Posterior vena cava (tissue), 2 donors: ENCODE measurements at regions of chr4 and their contacts with region 1.

Region 1: GRCh38 chr4:184136525-184136924 is 81.1 kb downstream of the ENPP6 start:
- DNase-seq: no peak

Region 2: DNA sequence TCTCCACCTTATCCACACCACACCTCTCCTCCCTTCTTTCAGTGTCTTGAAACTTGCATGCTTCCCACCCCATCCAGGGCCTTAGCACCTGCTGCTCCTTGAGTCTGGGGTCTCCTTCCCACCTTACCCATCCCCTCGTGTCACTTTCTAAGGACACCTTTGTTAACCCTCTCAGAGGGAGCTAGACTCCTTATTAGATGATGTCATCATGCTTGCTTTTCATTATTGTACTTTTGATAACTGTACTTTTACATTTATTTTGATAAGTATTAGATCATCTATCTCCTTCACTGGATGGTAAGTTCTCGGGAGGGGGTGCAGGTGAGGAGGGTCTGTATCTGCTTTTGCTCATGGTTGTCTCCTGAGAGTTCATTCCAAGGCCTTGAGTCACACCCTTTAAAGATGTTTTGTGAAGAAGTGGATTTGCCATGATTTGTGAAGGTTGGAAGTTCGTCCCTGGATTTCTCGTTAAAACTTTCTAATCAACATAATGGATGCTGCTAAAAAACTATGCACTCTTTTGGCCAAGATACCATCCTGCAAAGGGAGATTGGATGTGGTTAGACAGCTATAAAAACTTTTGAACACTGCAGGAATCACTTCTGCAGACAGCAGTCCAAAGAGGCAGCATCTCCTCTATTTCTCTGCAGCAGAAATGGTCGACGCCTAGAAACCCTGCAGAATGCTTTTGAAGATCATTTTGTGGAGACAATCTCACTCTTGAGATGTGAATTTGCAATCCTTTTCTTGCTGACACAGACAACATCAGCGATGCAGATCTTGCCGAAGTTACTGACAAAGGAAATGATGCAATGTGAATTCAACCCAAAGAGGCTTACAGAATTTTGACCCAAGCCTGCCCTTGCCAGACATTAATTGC is 11.6 kb after region 1 on chr4:
- intact Hi-C with region 1: loop called in 1 of 2 experiments (anchors 2 kb)
- DNase-seq: no peak

Region 3: GRCh38 chr4:184203300-184203699 is 66.8 kb after region 1 on chr4:
- intact Hi-C with region 1: loop called in 1 of 2 experiments (anchors 2 kb)
- DNase-seq: no peak